ENCODE measurements at regions of chr17 and their contacts with region 1.

Region 1: DNA sequence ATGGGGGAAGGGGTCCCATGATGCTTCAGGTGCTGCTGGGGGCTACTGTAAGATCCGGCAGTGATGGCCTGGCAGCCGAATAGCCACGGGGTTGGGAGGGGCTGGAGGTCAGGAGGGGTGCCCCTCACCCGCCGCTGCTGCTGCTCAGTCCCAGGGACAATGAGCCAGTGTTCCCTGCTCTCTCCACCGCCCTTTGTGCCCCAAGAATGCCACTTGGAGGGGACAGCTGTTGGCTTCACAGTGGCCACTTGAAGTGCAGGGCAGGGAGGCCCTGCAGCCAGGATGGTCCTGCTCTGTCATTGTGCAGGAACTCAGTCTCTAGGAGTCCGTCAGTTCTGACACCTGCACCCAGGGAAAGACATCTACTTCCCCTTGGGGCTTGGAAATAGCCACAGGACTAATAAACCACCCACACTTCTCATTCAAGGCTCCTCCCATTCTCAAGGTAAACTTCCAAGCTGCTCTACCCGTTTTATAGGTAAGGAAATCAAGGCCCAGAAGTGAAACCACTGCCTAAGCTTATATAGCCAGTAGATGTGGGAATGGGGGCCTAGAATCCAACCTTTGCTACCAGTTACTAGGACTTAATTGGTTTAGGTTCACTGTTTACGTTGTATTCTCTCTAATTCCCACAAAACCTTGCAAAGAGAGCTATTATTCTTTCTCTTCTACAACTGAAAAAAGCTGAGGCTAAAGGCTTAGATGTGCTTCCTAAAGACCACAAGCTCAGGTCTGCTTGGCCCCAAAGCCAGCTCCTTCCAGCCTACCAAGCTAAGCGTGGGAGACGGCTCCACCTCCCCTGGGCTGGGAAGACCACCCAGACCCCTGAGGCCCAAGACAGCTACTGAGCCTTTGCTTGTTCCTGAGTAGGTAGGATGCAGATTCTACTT is 6.2 kb upstream of the CPSF4L start:
- DNase-seq: no peak
- H3K4me3 ChIP-seq: no peak overlapping the region
- H3K27ac ChIP-seq: no peak overlapping the region
- H3K4me1 ChIP-seq: no peaks in the 10 kb centered on the region
- H3K27me3 ChIP-seq: no peaks in the 10 kb centered on the region

Region 2: DNA sequence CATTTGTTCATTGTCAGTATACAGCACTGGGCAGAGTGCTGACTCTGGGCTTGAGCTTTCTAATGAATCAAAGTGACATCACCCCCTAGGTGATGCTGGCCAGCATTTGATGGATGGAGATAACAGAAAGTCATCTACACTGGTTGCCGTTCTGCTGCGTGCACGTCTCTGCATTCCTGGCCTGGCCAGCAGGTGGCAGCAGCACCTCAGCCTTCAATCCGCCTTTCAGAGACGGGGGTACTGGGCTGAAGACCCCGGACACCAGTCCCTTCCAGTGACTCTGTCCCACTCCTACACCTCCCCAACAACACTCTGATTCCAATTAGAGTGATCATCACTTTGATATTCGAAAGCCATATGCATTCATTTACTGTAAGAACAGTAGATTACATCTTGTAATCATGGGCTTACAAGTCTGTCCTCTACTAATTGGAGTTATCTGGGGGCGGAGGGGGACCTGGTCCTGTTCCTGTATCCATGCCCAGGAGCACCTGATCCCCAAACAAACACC is 12.2 kb before region 1 on chr17:
- CTCF ChIA-PET with region 1: interaction called, 11 read pairs
- POLR2A ChIA-PET with region 1: no interaction called
- DNase-seq: peak; percentile 39 to 55 (median 51)
- H3K4me3 ChIP-seq: no peak overlapping the region
- H3K27ac ChIP-seq: no peak overlapping the region
- H3K4me1 ChIP-seq: no peaks in the 10 kb centered on the region
- H3K27me3 ChIP-seq: no peaks in the 10 kb centered on the region